Naive thymus-derived CD8-positive, alpha-beta T cell (primary cell): ENCODE measurements at regions of chr4 and their contacts with region 1.

Region 1: GRCh38 chr4:109690690-109691410 is 12.4 kb downstream of the CASP6 start:
- DNase-seq: peak in 3 of 10 donors; percentile 34 to 60 (median 57)
- ATAC-seq: peak; percentile 86 to 96
- H3K4me3 Mint-ChIP-seq: peak overlapping the region; percentile 33 to 78 (median 64)
- H3K27ac Mint-ChIP-seq: peak overlapping the region; percentile 74 to 94 (median 88)
- H3K4me1 Mint-ChIP-seq: peaks cover 21 to 43% (median 30%) of the 10 kb centered on the region in 4 donors
- H3K27me3 Mint-ChIP-seq: no peaks in the 10 kb centered on the region

Region 2: GRCh38 chr4:109302361-109303139 is 388.3 kb before region 1 on chr4 and contains the start of gene COL25A1:
- POLR2A ChIA-PET with region 1: no interaction called
- DNase-seq: peak; percentile 11 to 77 (median 44)
- ATAC-seq: peak; percentile 83 to 86
- H3K4me3 Mint-ChIP-seq: peak within 1 kb of the TSS; percentile 78 to 93 (median 86)
- H3K27ac Mint-ChIP-seq: peak within 1 kb of the TSS in 6 of 10 donors; percentile 18 to 77 (median 57)
- H3K4me1 Mint-ChIP-seq: peaks cover 18 to 28% (median 21%) of the 10 kb centered on the region in 4 donors
- H3K27me3 Mint-ChIP-seq: peaks cover 13 to 58% (median 38%) of the 10 kb centered on the region in 5 donors
- polyA plus RNA-seq, gene COL25A1: not detected

Region 3: GRCh38 chr4:109702950-109703663 is 12.3 kb after region 1 on chr4 and contains the start of gene CASP6:
- POLR2A ChIA-PET with region 1: interaction called, 13 read pairs
- DNase-seq: peak; percentile 62 to 82 (median 73)
- ATAC-seq: peak; percentile 84 to 90
- H3K4me3 Mint-ChIP-seq: peak within 1 kb of the TSS; percentile 90 to 98 (median 94)
- H3K27ac Mint-ChIP-seq: peak within 1 kb of the TSS; percentile 82 to 96 (median 94)
- H3K4me1 Mint-ChIP-seq: peaks cover 28 to 48% (median 42%) of the 10 kb centered on the region in 4 donors
- H3K27me3 Mint-ChIP-seq: no peaks in the 10 kb centered on the region
- polyA plus RNA-seq, gene CASP6: 57.2 to 87.7 (median 73.6) TPM

Region 4: DNA sequence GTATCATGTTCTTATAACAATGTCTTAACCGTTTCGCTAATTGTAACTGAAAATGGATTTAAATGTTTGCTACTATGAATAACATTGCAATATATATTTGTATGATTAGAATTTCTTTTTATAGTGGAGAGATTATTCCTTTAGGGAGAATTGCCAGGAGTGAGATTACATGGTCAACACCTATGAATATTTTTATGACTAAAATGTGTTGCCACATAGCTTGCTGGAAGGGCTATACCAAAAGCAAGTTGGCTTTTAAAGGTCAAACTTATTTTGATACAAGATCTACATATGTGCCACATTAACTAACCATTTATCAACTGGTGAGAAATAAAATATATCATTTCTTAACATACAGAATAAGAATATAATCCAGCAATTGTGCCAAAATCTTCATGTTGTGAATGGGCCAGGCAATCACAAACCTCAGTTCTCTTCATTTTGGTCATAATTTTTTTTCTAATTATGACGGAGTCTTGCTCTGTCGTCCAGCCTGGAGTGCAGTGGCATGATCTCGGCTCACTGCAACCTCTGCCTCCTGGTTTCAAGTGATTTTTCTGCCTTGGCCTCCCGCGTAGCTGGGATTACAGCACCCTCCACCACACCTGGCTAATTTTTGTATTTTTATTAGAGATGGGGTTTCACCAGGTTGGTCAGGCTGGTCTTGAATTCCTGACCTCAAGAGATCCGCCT is 211.9 kb after region 1 on chr4:
- POLR2A ChIA-PET with region 1: no interaction called
- DNase-seq: no peak
- ATAC-seq: no peak
- H3K4me3 Mint-ChIP-seq: no peak overlapping the region
- H3K27ac Mint-ChIP-seq: no peak overlapping the region
- H3K4me1 Mint-ChIP-seq: no peaks in the 10 kb centered on the region
- H3K27me3 Mint-ChIP-seq: peaks cover 6 to 41% (median 26%) of the 10 kb centered on the region in 5 donors